CD8-positive, alpha-beta T cell (primary cell): ENCODE measurements at regions of chr9 and their contacts with region 1.

Region 1: GRCh38 chr9:129783516-129784361 is 19.2 kb upstream of the TOR1B start:
- DNase-seq: peak; percentile 55 to 81 (median 73)
- ATAC-seq: peak; percentile 100
- H3K4me3 ChIP-seq: no peak overlapping the region
- H3K4me3 Mint-ChIP-seq: no peak overlapping the region
- H3K27ac ChIP-seq: no peak overlapping the region
- H3K27ac Mint-ChIP-seq: no peak overlapping the region
- H3K4me1 ChIP-seq: no peaks in the 10 kb centered on the region
- H3K4me1 Mint-ChIP-seq: peaks cover 4% of the 10 kb centered on the region
- H3K27me3 ChIP-seq: peaks cover 0 to 3% of the 10 kb centered on the region in 2 experiments
- H3K27me3 Mint-ChIP-seq: peaks cover 5% of the 10 kb centered on the region
- CTCF ChIP-seq: peak; percentile 84

Region 2: DNA sequence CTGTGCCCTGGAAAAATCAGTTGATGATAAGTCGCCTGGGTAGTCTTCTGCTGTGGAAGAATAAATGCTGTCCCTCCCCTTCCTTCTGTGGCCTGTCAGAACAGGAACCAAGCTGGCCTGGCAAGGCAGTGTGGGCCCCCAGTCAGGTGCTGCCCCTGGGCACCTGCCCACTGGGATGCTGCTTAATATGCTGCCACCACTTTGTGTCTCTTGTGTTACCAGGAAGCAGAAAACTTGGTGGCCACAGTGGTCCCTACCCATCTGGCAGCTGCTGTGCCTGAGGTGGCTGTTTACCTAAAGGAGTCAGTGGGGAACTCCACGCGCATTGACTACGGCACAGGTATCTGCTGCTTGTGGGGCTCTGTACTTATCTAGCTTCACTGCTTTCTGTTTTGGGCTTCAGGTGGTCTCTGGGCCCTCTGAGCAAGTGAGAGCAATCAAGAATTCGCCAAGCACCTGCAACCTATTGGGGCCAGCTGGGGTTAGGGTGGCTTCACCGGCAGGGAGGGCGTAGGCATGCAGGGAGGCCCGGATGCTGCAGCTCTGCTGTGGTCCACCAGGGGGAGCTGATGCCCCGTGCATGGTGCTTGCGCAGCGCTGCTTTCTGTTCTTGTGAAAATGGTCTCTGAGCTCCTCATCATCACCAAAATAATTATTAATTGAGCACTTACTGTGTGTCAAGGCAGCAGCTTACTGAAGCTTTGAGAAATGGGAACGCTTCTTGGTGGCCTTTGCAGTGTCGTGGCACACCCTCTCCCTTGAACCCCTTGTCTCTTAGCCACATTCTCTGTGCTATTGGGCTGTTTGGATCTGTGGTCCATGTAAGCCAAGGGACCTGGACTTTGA is 652.2 kb before region 1 on chr9:
- CTCF ChIA-PET with region 1: interaction called, 35 read pairs
- POLR2A ChIA-PET with region 1: no interaction called
- intact Hi-C with region 1: loop called (anchors 1 kb)
- DNase-seq: peak; percentile 77 to 92 (median 85)
- ATAC-seq: peak; percentile 100
- H3K4me3 ChIP-seq: no peak overlapping the region
- H3K4me3 Mint-ChIP-seq: no peak overlapping the region
- H3K27ac ChIP-seq: peak overlapping the region in 1 of 2 experiments; percentile 1
- H3K27ac Mint-ChIP-seq: peak overlapping the region; percentile 41
- H3K4me1 ChIP-seq: peaks cover 3% of the 10 kb centered on the region
- H3K4me1 Mint-ChIP-seq: peaks cover 5% of the 10 kb centered on the region
- H3K27me3 ChIP-seq: no peaks in the 10 kb centered on the region
- H3K27me3 Mint-ChIP-seq: no peaks in the 10 kb centered on the region
- CTCF ChIP-seq: peak; percentile 96

Region 3: DNA sequence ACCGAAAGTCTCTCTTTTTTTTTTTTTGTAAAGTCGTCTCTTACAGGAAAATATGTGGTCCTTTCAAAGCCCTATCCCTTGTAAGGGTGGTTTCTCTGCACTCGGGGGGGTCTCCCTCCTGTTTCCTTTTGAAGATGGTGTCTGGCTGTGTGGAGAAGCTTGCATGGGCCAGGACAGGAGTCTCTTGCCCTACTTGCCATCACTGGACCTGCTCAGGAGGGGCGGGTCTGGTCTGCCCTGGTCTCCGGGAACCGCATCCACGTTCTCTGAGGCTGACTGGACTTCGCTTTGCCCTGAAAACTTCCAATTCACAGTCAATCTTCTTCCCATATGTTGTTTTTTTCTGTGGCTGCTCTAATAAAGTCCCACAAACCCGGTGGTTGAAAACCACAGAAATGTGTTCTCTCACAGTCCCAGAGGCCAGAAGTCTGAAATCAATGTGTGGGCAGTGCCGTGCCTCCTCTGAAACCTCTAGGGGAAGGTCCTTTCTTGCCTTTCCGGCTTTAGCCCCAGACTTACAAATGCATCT is 512.8 kb before region 1 on chr9:
- CTCF ChIA-PET with region 1: no interaction called
- POLR2A ChIA-PET with region 1: no interaction called
- intact Hi-C with region 1: no loop called
- DNase-seq: peak in 2 of 9 experiments; percentile 23 to 64
- ATAC-seq: peak; percentile 55
- H3K4me3 ChIP-seq: peak overlapping the region; percentile 10 to 16
- H3K4me3 Mint-ChIP-seq: peak overlapping the region; percentile 76
- H3K27ac ChIP-seq: peak overlapping the region in 1 of 2 experiments; percentile 43
- H3K27ac Mint-ChIP-seq: peak overlapping the region; percentile 70
- H3K4me1 ChIP-seq: peaks cover 22% of the 10 kb centered on the region
- H3K4me1 Mint-ChIP-seq: peaks cover 31% of the 10 kb centered on the region
- H3K27me3 ChIP-seq: no peaks in the 10 kb centered on the region
- H3K27me3 Mint-ChIP-seq: no peaks in the 10 kb centered on the region
- CTCF ChIP-seq: no peak

Region 4: DNA sequence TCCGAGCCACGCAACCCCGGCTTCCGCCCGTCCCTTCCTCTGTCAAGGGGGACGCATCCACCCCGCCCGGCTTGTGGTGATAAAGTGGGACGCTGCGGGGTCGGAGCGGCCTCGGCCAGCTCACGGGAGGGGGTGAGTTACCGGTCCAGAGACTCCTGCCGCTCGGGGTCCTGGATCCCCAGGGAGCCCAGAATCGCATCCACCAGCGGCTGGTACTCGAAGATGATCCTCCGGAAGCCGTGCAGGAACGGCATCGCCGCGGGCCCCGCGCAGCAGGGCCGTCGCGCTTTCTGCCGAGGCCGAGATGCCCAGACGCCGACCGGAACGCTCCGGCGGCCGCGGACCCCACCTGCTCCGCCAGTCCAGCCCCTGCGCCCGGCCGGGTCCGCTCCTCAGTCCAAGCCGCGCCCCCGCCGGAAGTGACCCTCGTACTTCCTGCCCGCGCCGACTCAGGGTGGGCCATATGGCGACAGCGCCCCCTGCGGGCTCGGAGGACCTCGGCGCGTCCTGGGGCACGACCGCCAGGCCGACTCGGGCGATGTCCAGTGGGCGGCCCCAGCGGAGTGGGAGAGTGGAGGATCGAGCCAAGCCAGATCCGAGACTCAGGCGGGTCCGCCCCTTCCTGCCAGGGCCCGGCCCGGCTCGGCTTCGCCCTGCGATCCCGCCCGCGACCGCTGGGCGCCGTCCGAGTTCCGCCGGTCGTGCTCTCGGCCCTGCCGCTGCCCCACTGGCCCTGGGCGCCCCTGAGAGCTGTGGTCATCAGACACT is 141.8 kb before region 1 on chr9 and contains the start of gene ASB6:
- CTCF ChIA-PET with region 1: interaction called, 4 read pairs
- POLR2A ChIA-PET with region 1: no interaction called
- intact Hi-C with region 1: loop called (anchors 2 to 5 kb)
- DNase-seq: peak; percentile 78 to 97 (median 93)
- ATAC-seq: peak; percentile 76
- H3K4me3 ChIP-seq: peak within 1 kb of the TSS; percentile 98 to 99
- H3K4me3 Mint-ChIP-seq: peak within 1 kb of the TSS; percentile 85
- H3K27ac ChIP-seq: peak within 1 kb of the TSS; percentile 68 to 80
- H3K27ac Mint-ChIP-seq: peak within 1 kb of the TSS; percentile 89
- H3K4me1 ChIP-seq: peaks cover 23% of the 10 kb centered on the region
- H3K4me1 Mint-ChIP-seq: peaks cover 24% of the 10 kb centered on the region
- H3K27me3 ChIP-seq: no peaks in the 10 kb centered on the region
- H3K27me3 Mint-ChIP-seq: no peaks in the 10 kb centered on the region
- CTCF ChIP-seq: peak; percentile 100
- total RNA-seq, gene ASB6: 39.9 to 42.0 TPM

Region 5: DNA sequence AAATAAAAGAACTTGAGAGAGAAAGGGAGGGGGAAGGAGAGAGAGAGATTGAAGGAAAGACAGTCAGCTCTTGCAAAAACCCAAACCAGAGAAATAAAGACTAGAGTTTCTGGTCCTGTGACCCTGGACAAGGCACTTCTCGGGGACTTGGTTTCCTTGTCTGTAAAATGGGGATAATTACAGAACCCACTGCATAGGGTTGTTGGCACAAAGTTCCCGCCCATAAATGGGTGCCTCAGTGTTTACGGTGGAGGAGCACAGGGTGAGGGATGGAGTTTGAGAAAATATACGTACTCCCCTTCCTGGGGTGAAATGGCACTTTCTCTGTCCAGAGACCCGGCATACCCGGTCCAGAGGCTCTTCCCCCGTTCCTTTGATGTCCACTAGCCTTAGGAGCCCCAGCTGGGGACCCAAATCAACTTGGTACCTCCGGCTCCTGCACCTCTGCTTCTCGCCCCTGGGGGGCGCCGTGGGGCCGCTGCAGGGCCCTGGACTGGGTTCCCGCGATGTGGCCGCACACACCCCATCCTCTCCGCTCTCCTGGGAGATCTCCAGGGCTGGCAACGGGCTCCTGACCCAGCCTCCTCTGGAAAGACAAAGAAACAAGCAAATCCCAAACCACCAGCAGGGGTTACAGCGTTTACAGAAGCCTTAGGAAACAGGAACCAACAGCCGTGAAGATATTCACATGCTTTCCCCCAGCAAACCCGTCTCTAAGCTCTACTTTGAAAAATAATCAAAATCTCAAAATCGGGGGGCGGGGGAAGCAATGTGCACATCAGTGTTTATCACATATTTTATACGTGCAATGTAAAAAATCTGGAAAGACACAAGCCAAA is 57.2 kb before region 1 on chr9:
- CTCF ChIA-PET with region 1: interaction called, 38 read pairs
- POLR2A ChIA-PET with region 1: no interaction called
- intact Hi-C with region 1: loop called (anchors 1 kb)
- DNase-seq: peak; percentile 18 to 69 (median 55)
- ATAC-seq: peak; percentile 97
- H3K4me3 ChIP-seq: no peak overlapping the region
- H3K4me3 Mint-ChIP-seq: peak overlapping the region; percentile 50
- H3K27ac ChIP-seq: no peak overlapping the region
- H3K27ac Mint-ChIP-seq: no peak overlapping the region
- H3K4me1 ChIP-seq: peaks cover 6% of the 10 kb centered on the region
- H3K4me1 Mint-ChIP-seq: peaks cover 3% of the 10 kb centered on the region
- H3K27me3 ChIP-seq: no peaks in the 10 kb centered on the region
- H3K27me3 Mint-ChIP-seq: no peaks in the 10 kb centered on the region
- CTCF ChIP-seq: peak; percentile 86

Region 6: DNA sequence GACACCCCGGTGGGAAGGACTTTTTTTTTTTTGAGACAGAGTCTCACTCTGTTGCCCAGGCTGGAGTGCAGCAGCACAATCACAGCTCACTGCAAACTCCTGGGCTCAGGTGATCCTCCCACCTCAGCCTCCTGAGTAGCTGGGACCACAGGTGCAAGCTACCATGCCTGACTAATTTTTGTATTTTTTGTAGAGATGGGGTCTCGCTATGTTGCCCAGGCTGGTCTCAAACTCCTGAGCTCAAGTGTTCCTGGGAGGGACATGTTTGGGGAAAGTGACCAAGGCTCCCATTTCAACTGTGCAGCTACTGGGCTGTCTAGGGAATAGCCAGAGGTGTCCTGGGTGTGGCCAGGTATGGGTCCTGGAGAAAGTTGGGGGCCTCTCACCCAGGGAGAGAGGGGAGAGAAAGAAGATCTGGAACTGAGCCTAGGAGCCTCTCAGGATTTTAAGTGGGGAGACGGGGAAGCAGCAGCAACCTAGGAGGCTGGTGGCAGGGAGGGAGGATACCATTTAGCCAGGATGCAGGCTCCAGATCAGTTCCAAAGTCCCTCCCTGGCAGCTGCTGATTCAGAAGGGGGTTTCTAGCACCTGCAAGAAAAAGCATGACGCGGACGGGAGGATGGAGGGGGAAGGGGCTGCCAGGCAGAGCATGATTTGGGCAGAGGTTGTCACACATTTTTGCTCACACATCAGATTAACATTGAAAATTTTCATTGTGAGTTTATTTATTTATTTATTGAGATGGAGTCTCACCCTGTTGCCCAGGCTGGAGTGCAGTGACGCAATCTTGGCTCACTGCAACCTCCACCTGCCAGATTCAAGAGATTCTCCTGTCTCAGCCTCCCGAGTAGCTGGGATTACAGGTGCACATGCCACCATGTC is 12.5 kb after region 1 on chr9:
- CTCF ChIA-PET with region 1: interaction called, 10 read pairs
- POLR2A ChIA-PET with region 1: no interaction called
- intact Hi-C with region 1: no loop called
- DNase-seq: no peak
- ATAC-seq: no peak
- H3K4me3 ChIP-seq: no peak overlapping the region
- H3K4me3 Mint-ChIP-seq: no peak overlapping the region
- H3K27ac ChIP-seq: no peak overlapping the region
- H3K27ac Mint-ChIP-seq: no peak overlapping the region
- H3K4me1 ChIP-seq: no peaks in the 10 kb centered on the region
- H3K4me1 Mint-ChIP-seq: no peaks in the 10 kb centered on the region
- H3K27me3 ChIP-seq: no peaks in the 10 kb centered on the region
- H3K27me3 Mint-ChIP-seq: no peaks in the 10 kb centered on the region
- CTCF ChIP-seq: no peak